Activated CD8-positive, alpha-beta memory T cell treated with anti-CD3 and anti-CD28 coated beads, Interleukin-2, amount 10 ng/mL, durations not matched to agents 7 days and 5 days (primary cell): ENCODE measurements at regions of chr1 and their contacts with region 1.

Region 1: GRCh38 chr1:235971571-235972310 is 93.1 kb downstream of the NID1 start:
- DNase-seq: peak; percentile 95
- ATAC-seq: peak; percentile 98
- H3K4me3 Mint-ChIP-seq: peak overlapping the region; percentile 68
- H3K27ac Mint-ChIP-seq: peak overlapping the region; percentile 93
- H3K4me1 Mint-ChIP-seq: peaks cover 18% of the 10 kb centered on the region
- H3K27me3 Mint-ChIP-seq: peaks cover 10% of the 10 kb centered on the region

Region 2: GRCh38 chr1:235513495-235514366 is 458.0 kb before region 1 on chr1:
- CTCF ChIA-PET with region 1: interaction called, 20 read pairs
- DNase-seq: no peak
- ATAC-seq: peak; percentile 57
- H3K4me3 Mint-ChIP-seq: no peak overlapping the region
- H3K27ac Mint-ChIP-seq: no peak overlapping the region
- H3K4me1 Mint-ChIP-seq: no peaks in the 10 kb centered on the region
- H3K27me3 Mint-ChIP-seq: peaks cover 23% of the 10 kb centered on the region

Region 3: GRCh38 chr1:235843461-235843961 is 128.2 kb before region 1 on chr1:
- CTCF ChIA-PET with region 1: interaction called, 21 read pairs
- DNase-seq: no peak
- ATAC-seq: peak; percentile 83
- H3K4me3 Mint-ChIP-seq: no peak overlapping the region
- H3K27ac Mint-ChIP-seq: no peak overlapping the region
- H3K4me1 Mint-ChIP-seq: peaks cover 57% of the 10 kb centered on the region
- H3K27me3 Mint-ChIP-seq: no peaks in the 10 kb centered on the region

Region 4: GRCh38 chr1:235888119-235888643 is 83.6 kb before region 1 on chr1:
- CTCF ChIA-PET with region 1: interaction called, 12 read pairs
- DNase-seq: peak; percentile 89
- ATAC-seq: peak; percentile 87
- H3K4me3 Mint-ChIP-seq: peak overlapping the region; percentile 72
- H3K27ac Mint-ChIP-seq: peak overlapping the region; percentile 98
- H3K4me1 Mint-ChIP-seq: peaks cover 75% of the 10 kb centered on the region
- H3K27me3 Mint-ChIP-seq: no peaks in the 10 kb centered on the region

Region 5: GRCh38 chr1:235960809-235961208 is 10.9 kb before region 1 on chr1:
- CTCF ChIA-PET with region 1: interaction called, 68 read pairs
- DNase-seq: no peak
- ATAC-seq: no peak
- H3K4me3 Mint-ChIP-seq: no peak overlapping the region
- H3K27ac Mint-ChIP-seq: no peak overlapping the region
- H3K4me1 Mint-ChIP-seq: peaks cover 1% of the 10 kb centered on the region
- H3K27me3 Mint-ChIP-seq: peaks cover 17% of the 10 kb centered on the region

Region 6: GRCh38 chr1:235999259-235999925 is 27.7 kb after region 1 on chr1:
- CTCF ChIA-PET with region 1: interaction called, 32 read pairs
- DNase-seq: peak; percentile 87
- ATAC-seq: peak; percentile 86
- H3K4me3 Mint-ChIP-seq: peak overlapping the region; percentile 49
- H3K27ac Mint-ChIP-seq: peak overlapping the region; percentile 97
- H3K4me1 Mint-ChIP-seq: peaks cover 80% of the 10 kb centered on the region
- H3K27me3 Mint-ChIP-seq: no peaks in the 10 kb centered on the region

Region 7: GRCh38 chr1:236247286-236247685 is 275.5 kb after region 1 on chr1:
- CTCF ChIA-PET with region 1: no interaction called
- DNase-seq: no peak
- ATAC-seq: no peak
- H3K4me3 Mint-ChIP-seq: no peak overlapping the region
- H3K27ac Mint-ChIP-seq: no peak overlapping the region
- H3K4me1 Mint-ChIP-seq: no peaks in the 10 kb centered on the region
- H3K27me3 Mint-ChIP-seq: no peaks in the 10 kb centered on the region